ENCODE measurements at regions of chr5 and their contacts with region 1.

Region 1: DNA sequence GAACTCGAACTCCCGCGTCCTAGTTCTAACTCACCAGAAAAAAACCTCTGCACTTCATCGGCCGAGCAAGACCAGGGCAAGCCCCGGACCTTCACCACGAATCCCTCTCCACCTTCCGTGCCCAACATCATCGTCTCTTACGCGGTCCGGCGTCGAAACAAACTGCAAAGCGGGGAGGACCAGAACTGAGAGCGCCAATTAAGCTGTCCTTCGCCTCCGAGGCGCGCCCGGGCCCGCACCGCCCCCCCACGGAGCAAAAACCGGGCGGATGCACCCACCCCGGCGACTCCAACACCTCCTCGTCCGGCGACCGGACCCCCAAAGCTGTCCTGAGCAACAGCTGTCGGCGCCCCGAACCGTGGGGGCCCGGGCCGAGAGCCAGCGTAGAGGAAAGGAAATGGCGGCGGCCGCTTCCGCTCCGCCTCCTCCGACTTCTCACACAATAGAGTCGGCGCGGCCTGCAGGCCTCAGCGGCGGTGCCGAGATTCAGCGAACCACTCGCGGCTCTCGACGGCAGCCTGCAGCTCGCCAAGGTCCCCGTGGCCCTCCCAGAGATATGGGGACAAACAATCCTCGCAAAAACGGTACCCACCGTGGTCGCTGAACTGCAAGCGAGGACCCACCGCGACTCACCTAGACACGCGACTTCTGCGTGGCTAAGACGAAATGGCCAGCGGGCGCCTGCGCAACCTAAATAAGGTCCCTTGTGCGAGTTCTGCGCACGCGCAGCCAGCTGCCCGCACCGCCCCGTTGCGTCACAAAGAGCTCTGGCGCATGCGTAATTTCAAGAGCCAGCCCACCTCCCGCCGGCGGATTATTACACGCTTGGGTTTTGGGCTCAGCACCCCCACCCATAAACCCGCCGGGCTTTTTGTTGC is at the start of gene HNRNPH1:
- DNase-seq: peak; percentile 98 to 99
- H3K4me3 ChIP-seq: peak within 1 kb of the TSS; percentile 94
- H3K4me3 Mint-ChIP-seq: peak within 1 kb of the TSS; percentile 95
- H3K27ac Mint-ChIP-seq: peak within 1 kb of the TSS; percentile 99
- H3K4me1 ChIP-seq: peaks cover 28% of the 10 kb centered on the region
- H3K4me1 Mint-ChIP-seq: peaks cover 35% of the 10 kb centered on the region
- H3K27me3 ChIP-seq: no peaks in the 10 kb centered on the region
- H3K27me3 Mint-ChIP-seq: peaks cover 3% of the 10 kb centered on the region
- CTCF ChIP-seq: peak in 1 of 2 experiments; percentile 11
- total RNA-seq, gene HNRNPH1: 914 and 940 TPM in 2 replicates

Region 2: GRCh38 chr5:179414459-179415261 is 208.6 kb before region 1 on chr5:
- CTCF ChIA-PET with region 1: no interaction called
- POLR2A ChIA-PET with region 1: no interaction called
- intact Hi-C with region 1: no loop called
- DNase-seq: no peak
- H3K4me3 ChIP-seq: no peak overlapping the region
- H3K4me3 Mint-ChIP-seq: no peak overlapping the region
- H3K27ac Mint-ChIP-seq: no peak overlapping the region
- H3K4me1 ChIP-seq: no peaks in the 10 kb centered on the region
- H3K4me1 Mint-ChIP-seq: no peaks in the 10 kb centered on the region
- H3K27me3 ChIP-seq: no peaks in the 10 kb centered on the region
- H3K27me3 Mint-ChIP-seq: peaks cover 8% of the 10 kb centered on the region
- CTCF ChIP-seq: no peak

Region 3: GRCh38 chr5:179486596-179487051 is 136.6 kb before region 1 on chr5:
- CTCF ChIA-PET with region 1: no interaction called
- POLR2A ChIA-PET with region 1: no interaction called
- intact Hi-C with region 1: no loop called
- DNase-seq: no peak
- H3K4me3 ChIP-seq: no peak overlapping the region
- H3K4me3 Mint-ChIP-seq: no peak overlapping the region
- H3K27ac Mint-ChIP-seq: no peak overlapping the region
- H3K4me1 ChIP-seq: no peaks in the 10 kb centered on the region
- H3K4me1 Mint-ChIP-seq: no peaks in the 10 kb centered on the region
- H3K27me3 ChIP-seq: no peaks in the 10 kb centered on the region
- H3K27me3 Mint-ChIP-seq: no peaks in the 10 kb centered on the region
- CTCF ChIP-seq: no peak

Region 4: DNA sequence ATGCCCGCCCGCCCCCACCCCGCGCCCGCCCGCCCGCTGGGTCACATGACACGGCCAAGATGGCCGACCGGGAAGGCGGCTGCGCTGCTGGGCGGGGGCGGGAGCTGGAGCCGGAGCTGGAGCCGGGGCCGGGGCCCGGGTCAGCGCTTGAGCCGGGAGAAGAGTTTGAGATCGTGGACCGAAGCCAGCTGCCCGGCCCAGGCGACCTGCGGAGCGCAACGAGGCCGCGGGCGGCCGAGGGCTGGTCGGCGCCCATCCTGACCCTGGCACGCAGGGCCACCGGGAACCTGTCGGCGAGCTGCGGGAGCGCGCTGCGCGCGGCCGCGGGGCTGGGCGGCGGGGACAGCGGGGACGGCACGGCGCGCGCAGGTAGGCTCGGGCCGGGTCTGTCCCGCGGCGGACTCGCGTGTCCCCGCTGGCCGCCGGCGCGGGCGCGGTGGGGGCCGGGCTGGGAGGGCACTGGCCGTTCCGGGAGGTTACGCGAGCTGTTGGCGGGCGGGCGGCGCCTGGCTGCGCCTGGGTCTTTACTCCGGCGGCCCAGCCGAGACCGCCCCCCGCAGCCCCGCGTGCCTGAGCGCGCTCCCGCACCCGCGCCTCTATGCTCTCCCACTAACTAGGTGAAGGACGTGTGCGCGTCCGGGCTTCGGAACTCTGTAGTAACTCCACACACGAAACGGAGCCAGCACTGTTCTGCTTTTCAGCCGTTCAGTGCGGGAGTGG is 72.6 kb before region 1 on chr5 and contains the start of gene RUFY1:
- CTCF ChIA-PET with region 1: no interaction called
- POLR2A ChIA-PET with region 1: interaction called, 12 read pairs
- intact Hi-C with region 1: loop called (anchors 5 kb)
- DNase-seq: peak; percentile 78 to 92
- H3K4me3 ChIP-seq: peak within 1 kb of the TSS; percentile 100
- H3K4me3 Mint-ChIP-seq: peak within 1 kb of the TSS; percentile 97
- H3K27ac Mint-ChIP-seq: peak within 1 kb of the TSS; percentile 96
- H3K4me1 ChIP-seq: peaks cover 16% of the 10 kb centered on the region; the same call in 1 of the 2 replicates
- H3K4me1 Mint-ChIP-seq: peaks cover 5% of the 10 kb centered on the region
- H3K27me3 ChIP-seq: no peaks in the 10 kb centered on the region
- H3K27me3 Mint-ChIP-seq: no peaks in the 10 kb centered on the region
- CTCF ChIP-seq: no peak
- total RNA-seq, gene RUFY1: 33.4 and 36.3 TPM in 2 replicates

Region 5: DNA sequence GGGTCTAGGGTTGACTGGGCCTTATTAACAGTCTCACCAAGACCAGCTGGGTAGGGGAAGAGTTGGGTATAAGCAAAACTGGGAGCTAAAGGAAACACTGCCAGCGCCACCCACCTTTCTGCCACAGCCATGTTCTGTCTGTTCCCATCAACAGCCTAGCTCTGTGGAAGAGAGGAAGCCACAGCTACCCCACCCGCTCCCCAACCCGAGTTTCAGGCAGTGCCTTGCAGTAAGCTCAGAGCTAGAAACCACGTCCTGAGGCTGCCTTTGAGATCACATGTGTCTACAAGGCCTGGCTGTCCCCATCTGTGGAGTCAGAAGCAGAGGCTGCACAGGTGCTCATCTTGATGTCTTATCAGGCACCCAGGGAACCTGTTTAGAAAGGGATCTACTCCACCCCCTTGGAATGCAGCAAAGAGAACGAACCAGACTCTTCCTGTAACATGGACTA is 15.1 kb before region 1 on chr5:
- CTCF ChIA-PET with region 1: interaction called, 3 read pairs
- POLR2A ChIA-PET with region 1: interaction called, 42 read pairs
- intact Hi-C with region 1: no loop called
- DNase-seq: peak; percentile 66 to 77
- H3K4me3 ChIP-seq: no peak overlapping the region
- H3K4me3 Mint-ChIP-seq: no peak overlapping the region
- H3K27ac Mint-ChIP-seq: peak overlapping the region; percentile 66
- H3K4me1 ChIP-seq: peaks cover 10% of the 10 kb centered on the region
- H3K4me1 Mint-ChIP-seq: peaks cover 31% of the 10 kb centered on the region
- H3K27me3 ChIP-seq: no peaks in the 10 kb centered on the region
- H3K27me3 Mint-ChIP-seq: no peaks in the 10 kb centered on the region
- CTCF ChIP-seq: no peak

Region 6: DNA sequence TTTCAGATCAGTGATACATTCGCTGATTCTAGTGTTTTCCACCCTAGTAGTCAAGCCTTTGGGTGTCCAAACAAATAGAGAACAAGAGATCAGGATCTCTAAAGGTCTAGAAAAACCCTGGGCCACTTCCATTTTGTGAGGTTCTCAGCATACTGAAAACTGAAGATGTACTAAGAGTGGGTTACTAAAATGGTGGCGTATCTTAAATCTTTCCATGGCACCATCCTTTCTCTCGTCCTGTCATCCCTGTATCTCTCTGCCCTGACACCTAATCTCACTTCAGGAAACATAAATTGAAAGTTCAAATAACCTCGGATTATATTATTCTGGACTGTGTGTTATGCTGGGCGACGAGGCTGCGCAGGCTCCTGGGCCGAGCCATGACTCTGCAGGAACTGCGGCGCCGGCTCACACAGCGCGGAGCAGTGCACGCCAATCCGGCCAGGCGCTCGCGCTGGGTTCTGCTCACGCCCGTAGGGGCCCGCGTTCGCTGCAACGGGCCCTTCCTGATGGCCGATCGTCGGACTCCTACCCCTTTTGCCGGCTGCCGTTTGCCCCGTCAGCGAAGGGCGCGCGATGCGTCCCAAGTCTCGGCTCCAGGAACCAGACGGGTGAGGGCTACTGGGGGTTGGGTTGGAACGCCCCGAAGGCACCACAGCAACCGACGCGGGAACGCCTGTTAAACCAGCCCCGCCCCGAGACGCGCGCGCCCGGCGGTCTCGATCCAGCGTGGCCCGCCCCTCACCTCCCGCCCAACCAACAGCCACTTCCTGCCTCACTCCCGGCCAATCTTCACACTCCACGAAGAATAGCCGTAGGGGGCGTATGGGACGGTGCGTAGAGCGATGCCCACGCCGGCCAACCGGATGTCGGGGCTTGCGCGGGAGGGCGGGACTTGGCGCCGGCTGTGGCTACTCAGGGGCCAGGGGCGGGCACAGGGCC is 75.0 kb after region 1 on chr5:
- CTCF ChIA-PET with region 1: no interaction called
- POLR2A ChIA-PET with region 1: interaction called, 4 read pairs
- intact Hi-C with region 1: loop called (anchors 1 kb)
- DNase-seq: peak; percentile 99 to 100
- H3K4me3 ChIP-seq: peak overlapping the region; percentile 95
- H3K4me3 Mint-ChIP-seq: peak overlapping the region; percentile 99
- H3K27ac Mint-ChIP-seq: peak overlapping the region; percentile 93
- H3K4me1 ChIP-seq: peaks cover 8% of the 10 kb centered on the region
- H3K4me1 Mint-ChIP-seq: peaks cover 8% of the 10 kb centered on the region
- H3K27me3 ChIP-seq: no peaks in the 10 kb centered on the region
- H3K27me3 Mint-ChIP-seq: no peaks in the 10 kb centered on the region
- CTCF ChIP-seq: no peak

Region 7: DNA sequence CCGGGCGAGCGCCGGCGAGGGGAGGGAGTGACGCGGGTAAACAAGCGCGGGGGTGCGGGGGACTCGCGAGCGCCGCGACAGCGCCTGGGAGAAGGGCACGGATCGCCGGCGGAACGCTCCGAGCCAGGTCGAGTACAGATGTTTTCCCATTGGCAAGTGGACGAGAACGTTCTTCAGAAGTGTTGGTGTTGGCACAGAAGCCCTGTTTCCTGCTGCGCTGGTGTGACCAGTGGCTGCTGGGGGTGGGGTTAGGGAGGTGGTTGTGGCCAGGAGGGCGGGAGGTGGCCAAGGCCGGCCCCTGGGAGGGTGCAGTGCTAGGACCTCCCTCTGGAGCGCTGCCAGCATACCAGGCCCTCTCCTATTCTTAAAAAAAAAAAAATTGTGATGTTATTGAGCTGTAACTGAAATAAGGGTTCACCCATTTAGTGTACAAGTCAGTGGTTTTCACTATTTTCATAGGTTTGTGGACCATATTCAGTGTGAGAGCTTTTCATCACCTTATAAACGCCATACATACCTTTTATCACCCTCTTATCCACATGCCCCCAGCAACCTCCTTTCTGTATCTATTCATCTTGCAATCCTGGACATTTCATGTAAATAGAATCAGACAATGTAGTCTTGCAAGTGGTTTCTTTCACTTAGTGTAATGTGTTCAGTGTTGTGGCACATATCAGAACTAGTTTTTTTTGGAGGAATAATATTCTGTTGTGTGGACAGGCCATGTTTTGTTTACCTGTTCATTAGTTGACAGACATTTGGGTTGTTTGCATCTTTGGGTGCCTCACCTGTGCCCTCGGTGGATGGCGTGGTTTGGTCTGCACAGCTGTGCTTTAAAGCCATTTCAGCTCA is 198.6 kb after region 1 on chr5:
- CTCF ChIA-PET with region 1: no interaction called
- POLR2A ChIA-PET with region 1: interaction called, 4 read pairs
- intact Hi-C with region 1: loop called (anchors 10 kb)
- DNase-seq: peak; percentile 90
- H3K4me3 ChIP-seq: peak overlapping the region; percentile 97
- H3K4me3 Mint-ChIP-seq: peak overlapping the region; percentile 88
- H3K27ac Mint-ChIP-seq: peak overlapping the region; percentile 89
- H3K4me1 ChIP-seq: peaks cover 59% of the 10 kb centered on the region
- H3K4me1 Mint-ChIP-seq: peaks cover 37% of the 10 kb centered on the region
- H3K27me3 ChIP-seq: no peaks in the 10 kb centered on the region
- H3K27me3 Mint-ChIP-seq: no peaks in the 10 kb centered on the region
- CTCF ChIP-seq: no peak

Measured in Caco-2 (cell line).